Aorta (tissue), 5 donors: ENCODE measurements at regions of chr7 and their contacts with region 1.

Region 1: GRCh38 chr7:121069346-121070100 is 81.0 kb downstream of the CPED1 start:
- DNase-seq: peak in 1 of 2 donors; percentile 51
- ATAC-seq: peak; percentile 93
- H3K4me3 ChIP-seq: no peak overlapping the region
- H3K27ac ChIP-seq: peak overlapping the region; percentile 74 to 82
- H3K4me1 ChIP-seq: peaks cover 7 to 10% of the 10 kb centered on the region in 2 donors
- H3K27me3 ChIP-seq: no peaks in the 10 kb centered on the region

Region 2: GRCh38 chr7:121000081-121000983 is 69.2 kb before region 1 on chr7:
- intact Hi-C with region 1: loop called in 1 of 2 experiments (anchors 5 kb)
- DNase-seq: no peak
- ATAC-seq: peak; percentile 67
- H3K4me3 ChIP-seq: peak overlapping the region; percentile 8 to 64
- H3K27ac ChIP-seq: peak overlapping the region; percentile 82 to 95
- H3K4me1 ChIP-seq: peaks cover 9 to 23% of the 10 kb centered on the region in 2 donors
- H3K27me3 ChIP-seq: no peaks in the 10 kb centered on the region